ENCODE measurements at regions of chr11 and their contacts with region 1.

Region 1: GRCh38 chr11:6377902-6378639 is 12.2 kb upstream of the SMPD1 start:
- DNase-seq: no peak
- H3K4me3 ChIP-seq: no peak overlapping the region
- H3K27ac ChIP-seq: no peak overlapping the region
- H3K4me1 ChIP-seq: no peaks in the 10 kb centered on the region
- H3K27me3 ChIP-seq: no peaks in the 10 kb centered on the region
- CTCF ChIP-seq: no peak

Region 2: DNA sequence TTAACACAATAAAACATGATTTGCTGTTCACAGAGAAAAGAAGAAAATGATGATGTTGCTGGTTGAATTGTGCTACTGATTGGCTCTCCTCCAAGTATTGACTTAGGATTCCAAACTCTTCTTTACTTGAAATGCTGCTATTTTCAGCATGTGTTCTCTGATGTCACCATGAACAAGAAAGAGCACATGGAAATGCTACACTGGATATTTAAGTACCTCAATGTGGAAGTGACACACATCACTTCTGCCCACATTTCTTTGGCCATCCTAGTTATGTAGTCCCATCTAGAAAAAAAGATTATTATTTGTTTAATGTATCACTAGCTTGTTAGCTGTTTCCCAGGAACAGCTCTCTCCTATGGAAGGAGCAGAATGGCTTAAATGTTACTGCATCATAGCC is 235.1 kb before region 1 on chr11:
- intact Hi-C with region 1: no loop called
- DNase-seq: no peak
- H3K4me3 ChIP-seq: no peak overlapping the region
- H3K27ac ChIP-seq: no peak overlapping the region
- H3K4me1 ChIP-seq: no peaks in the 10 kb centered on the region
- H3K27me3 ChIP-seq: no peaks in the 10 kb centered on the region
- CTCF ChIP-seq: no peak

Region 3: GRCh38 chr11:6443269-6444003 is 65.4 kb after region 1 on chr11:
- intact Hi-C with region 1: loop called (anchors 2 kb)
- DNase-seq: peak; percentile 55
- H3K4me3 ChIP-seq: no peak overlapping the region
- H3K27ac ChIP-seq: no peak overlapping the region
- H3K4me1 ChIP-seq: no peaks in the 10 kb centered on the region
- H3K27me3 ChIP-seq: no peaks in the 10 kb centered on the region
- CTCF ChIP-seq: peak; percentile 86

Region 4: GRCh38 chr11:6505577-6506240 is 127.6 kb after region 1 on chr11:
- intact Hi-C with region 1: loop called (anchors 2 kb)
- DNase-seq: no peak
- H3K4me3 ChIP-seq: no peak overlapping the region
- H3K27ac ChIP-seq: no peak overlapping the region
- H3K4me1 ChIP-seq: no peaks in the 10 kb centered on the region
- H3K27me3 ChIP-seq: no peaks in the 10 kb centered on the region
- CTCF ChIP-seq: peak; percentile 74

Region 5: GRCh38 chr11:6812390-6813005 is 434.4 kb after region 1 on chr11:
- intact Hi-C with region 1: no loop called
- DNase-seq: peak; percentile 29
- H3K4me3 ChIP-seq: no peak overlapping the region
- H3K27ac ChIP-seq: no peak overlapping the region
- H3K4me1 ChIP-seq: no peaks in the 10 kb centered on the region
- H3K27me3 ChIP-seq: no peaks in the 10 kb centered on the region
- CTCF ChIP-seq: peak; percentile 81

Measured in colonic mucosa (tissue), 4 donors.